Naive thymus-derived CD4-positive, alpha-beta T cell (primary cell): ENCODE measurements at regions of chr9 and their contacts with region 1.

Region 1: GRCh38 chr9:84621811-84622210 is 47.7 kb upstream of the NTRK2 start:
- DNase-seq: no peak
- ATAC-seq: no peak
- H3K4me3 ChIP-seq: no peak overlapping the region
- H3K4me3 Mint-ChIP-seq: no peak overlapping the region
- H3K27ac ChIP-seq: no peak overlapping the region
- H3K27ac Mint-ChIP-seq: no peak overlapping the region
- H3K4me1 ChIP-seq: no peaks in the 10 kb centered on the region
- H3K4me1 Mint-ChIP-seq: no peaks in the 10 kb centered on the region
- H3K27me3 ChIP-seq: no peaks in the 10 kb centered on the region
- H3K27me3 Mint-ChIP-seq: peaks cover 0 to 15% (median 3%) of the 10 kb centered on the region in 5 donors

Region 2: GRCh38 chr9:84271531-84271900 is 350.3 kb before region 1 on chr9:
- CTCF ChIA-PET with region 1: no interaction called
- POLR2A ChIA-PET with region 1: no interaction called
- intact Hi-C with region 1: no loop called
- DNase-seq: peak in 6 of 9 donors; percentile 35 to 57 (median 47)
- ATAC-seq: peak; percentile 64
- H3K4me3 ChIP-seq: no peak overlapping the region
- H3K4me3 Mint-ChIP-seq: peak overlapping the region in 9 of 10 donors; percentile 42 to 82 (median 64)
- H3K27ac ChIP-seq: no peak overlapping the region
- H3K27ac Mint-ChIP-seq: peak overlapping the region in 4 of 9 donors; percentile 4 to 79 (median 38)
- H3K4me1 ChIP-seq: peaks cover 0 to 7% of the 10 kb centered on the region in 2 donors
- H3K4me1 Mint-ChIP-seq: peaks cover 0 to 34% (median 9%) of the 10 kb centered on the region in 7 donors
- H3K27me3 ChIP-seq: no peaks in the 10 kb centered on the region
- H3K27me3 Mint-ChIP-seq: peaks cover 17 to 55% (median 41%) of the 10 kb centered on the region in 5 donors

Region 3: DNA sequence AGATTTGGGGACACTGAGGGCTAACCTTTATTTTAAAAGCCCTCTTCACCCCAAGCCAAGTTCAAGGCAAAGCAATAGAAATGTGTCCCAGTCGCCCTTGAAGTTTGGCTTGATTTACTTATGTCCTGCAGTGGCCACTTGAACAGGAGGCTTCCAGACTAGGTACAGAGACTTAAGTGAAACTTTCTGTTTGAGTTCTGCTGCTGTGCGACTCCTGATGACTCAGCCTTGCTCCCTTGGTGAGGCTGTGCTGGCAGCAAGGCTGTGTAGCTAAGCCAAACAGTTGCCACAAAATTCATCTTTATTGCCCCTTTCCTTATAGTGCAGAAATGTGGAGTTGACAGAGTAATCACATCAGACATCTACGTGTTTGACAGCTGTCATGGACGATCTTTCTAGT is 21.1 kb before region 1 on chr9:
- CTCF ChIA-PET with region 1: no interaction called
- POLR2A ChIA-PET with region 1: no interaction called
- intact Hi-C with region 1: loop called in 1 of 2 experiments (anchors 1 kb)
- DNase-seq: no peak
- ATAC-seq: no peak
- H3K4me3 ChIP-seq: no peak overlapping the region
- H3K4me3 Mint-ChIP-seq: no peak overlapping the region
- H3K27ac ChIP-seq: no peak overlapping the region
- H3K27ac Mint-ChIP-seq: no peak overlapping the region
- H3K4me1 ChIP-seq: no peaks in the 10 kb centered on the region
- H3K4me1 Mint-ChIP-seq: peaks cover 0 to 8% (median 0%) of the 10 kb centered on the region in 7 donors
- H3K27me3 ChIP-seq: no peaks in the 10 kb centered on the region
- H3K27me3 Mint-ChIP-seq: peaks cover 0 to 17% (median 7%) of the 10 kb centered on the region in 5 donors